CD4-positive, alpha-beta memory T cell (primary cell): ENCODE measurements at regions of chr5 and their contacts with region 1.

Region 1: DNA sequence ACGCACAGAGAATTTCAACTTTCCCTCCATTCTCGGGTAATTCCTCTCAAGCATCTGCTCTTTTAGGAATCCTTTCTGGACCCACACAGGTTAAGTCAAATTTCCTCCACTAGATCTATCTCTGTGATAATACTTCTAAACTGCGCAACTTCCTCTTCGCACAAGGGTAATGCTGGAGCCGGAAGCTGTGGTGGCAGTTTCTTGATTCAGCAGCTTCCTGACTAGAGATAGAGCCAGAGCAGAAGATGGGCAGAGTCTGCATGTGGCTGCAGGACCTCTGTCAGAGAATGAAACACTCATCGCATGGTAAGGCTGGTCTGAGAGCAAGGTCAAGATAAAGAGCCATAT is 11.1 kb upstream of the CDC42SE2 start:
- DNase-seq: peak; percentile 86 to 95 (median 88)
- H3K4me3 ChIP-seq: peak overlapping the region; percentile 60 to 80
- H3K4me3 Mint-ChIP-seq: peak overlapping the region; percentile 94 to 98 (median 97)
- H3K27ac ChIP-seq: peak overlapping the region; percentile 79
- H3K27ac Mint-ChIP-seq: peak overlapping the region; percentile 92 to 99 (median 97)
- H3K4me1 ChIP-seq: peaks cover 58% of the 10 kb centered on the region
- H3K4me1 Mint-ChIP-seq: peaks cover 46 to 78% (median 54%) of the 10 kb centered on the region in 4 donors
- H3K27me3 ChIP-seq: no peaks in the 10 kb centered on the region
- H3K27me3 Mint-ChIP-seq: no peaks in the 10 kb centered on the region

Region 2: DNA sequence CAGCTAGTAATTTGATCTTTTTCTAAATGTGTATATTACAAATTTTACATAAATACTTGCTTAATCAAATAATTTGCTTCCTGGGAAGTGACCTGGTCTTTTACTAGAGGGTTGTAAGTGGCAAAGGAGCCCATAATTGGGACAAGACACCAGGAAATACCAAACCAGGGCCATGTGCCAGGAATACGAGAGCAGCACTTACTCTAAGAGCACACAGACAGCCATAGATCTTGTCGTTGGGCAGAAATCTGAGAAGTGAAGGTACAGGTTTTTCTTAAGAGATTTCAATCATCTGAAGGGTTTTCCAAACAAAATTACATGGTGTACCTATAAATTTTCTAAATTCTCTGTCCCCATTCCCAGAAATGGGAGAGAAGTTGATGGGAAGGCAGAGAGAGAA is 267.0 kb before region 1 on chr5:
- CTCF ChIA-PET with region 1: no interaction called
- POLR2A ChIA-PET with region 1: no interaction called
- intact Hi-C with region 1: no loop called
- DNase-seq: no peak
- H3K4me3 ChIP-seq: no peak overlapping the region
- H3K4me3 Mint-ChIP-seq: no peak overlapping the region
- H3K27ac ChIP-seq: no peak overlapping the region
- H3K27ac Mint-ChIP-seq: no peak overlapping the region
- H3K4me1 ChIP-seq: no peaks in the 10 kb centered on the region
- H3K4me1 Mint-ChIP-seq: no peaks in the 10 kb centered on the region
- H3K27me3 ChIP-seq: no peaks in the 10 kb centered on the region
- H3K27me3 Mint-ChIP-seq: peaks cover 3 to 8% of the 10 kb centered on the region in 2 donors

Region 3: GRCh38 chr5:131170540-131171275 is 82.1 kb before region 1 on chr5 and contains the start of gene LYRM7:
- CTCF ChIA-PET with region 1: interaction called, 10 read pairs
- POLR2A ChIA-PET with region 1: interaction called, 23 read pairs
- intact Hi-C with region 1: loop called (anchors 1 kb)
- DNase-seq: peak; percentile 94 to 99 (median 97)
- H3K4me3 ChIP-seq: peak within 1 kb of the TSS; percentile 67 to 69
- H3K4me3 Mint-ChIP-seq: peak within 1 kb of the TSS; percentile 95 to 100 (median 98)
- H3K27ac ChIP-seq: peak within 1 kb of the TSS; percentile 88
- H3K27ac Mint-ChIP-seq: peak within 1 kb of the TSS; percentile 91 to 99 (median 97)
- H3K4me1 ChIP-seq: peaks cover 31% of the 10 kb centered on the region
- H3K4me1 Mint-ChIP-seq: peaks cover 33 to 72% (median 54%) of the 10 kb centered on the region in 4 donors
- H3K27me3 ChIP-seq: no peaks in the 10 kb centered on the region
- H3K27me3 Mint-ChIP-seq: no peaks in the 10 kb centered on the region
- total RNA-seq, gene LYRM7: 16.7 to 18.4 TPM

Region 4: GRCh38 chr5:131209506-131210150 is 43.2 kb before region 1 on chr5:
- CTCF ChIA-PET with region 1: interaction called, 8 read pairs
- POLR2A ChIA-PET with region 1: interaction called, 45 read pairs
- intact Hi-C with region 1: loop called (anchors 1 kb)
- DNase-seq: peak; percentile 78 to 87 (median 81)
- H3K4me3 ChIP-seq: peak overlapping the region in 1 of 2 donors; percentile 16
- H3K4me3 Mint-ChIP-seq: peak overlapping the region; percentile 58 to 89 (median 84)
- H3K27ac ChIP-seq: peak overlapping the region; percentile 75
- H3K27ac Mint-ChIP-seq: peak overlapping the region; percentile 91 to 99 (median 98)
- H3K4me1 ChIP-seq: peaks cover 57% of the 10 kb centered on the region
- H3K4me1 Mint-ChIP-seq: peaks cover 39 to 59% (median 50%) of the 10 kb centered on the region in 4 donors
- H3K27me3 ChIP-seq: no peaks in the 10 kb centered on the region
- H3K27me3 Mint-ChIP-seq: no peaks in the 10 kb centered on the region

Region 5: GRCh38 chr5:131214609-131215227 is 38.1 kb before region 1 on chr5:
- CTCF ChIA-PET with region 1: interaction called, 8 read pairs
- POLR2A ChIA-PET with region 1: interaction called, 45 read pairs
- intact Hi-C with region 1: loop called (anchors 1 kb)
- DNase-seq: no peak
- H3K4me3 ChIP-seq: no peak overlapping the region
- H3K4me3 Mint-ChIP-seq: peak overlapping the region in 2 of 8 donors; percentile 1 to 12
- H3K27ac ChIP-seq: no peak overlapping the region
- H3K27ac Mint-ChIP-seq: peak overlapping the region in 2 of 7 donors; percentile 31 to 50
- H3K4me1 ChIP-seq: peaks cover 46% of the 10 kb centered on the region
- H3K4me1 Mint-ChIP-seq: peaks cover 23 to 49% (median 34%) of the 10 kb centered on the region in 4 donors
- H3K27me3 ChIP-seq: no peaks in the 10 kb centered on the region
- H3K27me3 Mint-ChIP-seq: no peaks in the 10 kb centered on the region

Region 6: DNA sequence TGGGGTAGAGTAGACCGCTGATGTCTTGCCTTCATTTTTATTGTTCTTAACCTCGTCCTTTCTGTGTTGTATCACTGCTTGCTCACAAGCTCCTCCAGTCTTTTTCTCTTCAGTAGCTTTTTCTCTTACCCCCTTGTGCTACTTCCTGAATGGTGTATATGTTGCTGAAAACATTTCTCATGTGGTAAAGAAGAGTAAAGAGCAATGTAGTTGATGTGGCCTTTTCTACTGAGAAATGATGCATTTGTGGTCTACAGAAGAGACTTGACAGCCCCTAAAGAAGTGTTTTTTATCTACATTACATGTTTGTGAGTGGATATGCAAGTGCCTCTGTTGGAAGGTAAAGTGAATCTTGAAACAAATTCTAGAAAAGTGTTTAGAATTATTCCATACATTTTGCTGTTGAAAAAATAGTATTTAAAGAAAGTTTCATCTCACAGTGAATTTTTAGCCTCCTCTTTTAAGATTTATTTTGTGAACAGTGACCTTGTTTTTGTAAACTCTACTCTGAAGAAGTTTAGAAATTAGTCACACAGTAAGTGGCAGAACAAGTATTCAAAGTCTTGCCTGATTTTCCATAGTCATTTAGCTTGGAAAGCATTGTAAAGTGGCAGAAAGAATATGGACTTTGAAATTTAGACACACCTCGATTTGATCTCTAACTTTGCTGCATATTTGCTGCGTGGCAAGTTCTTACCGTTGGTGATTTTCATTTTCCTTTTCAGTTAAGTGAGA is 28.5 kb after region 1 on chr5:
- CTCF ChIA-PET with region 1: no interaction called
- POLR2A ChIA-PET with region 1: interaction called, 1,078 read pairs
- intact Hi-C with region 1: loop called (anchors 1 kb)
- DNase-seq: peak; percentile 57 to 89 (median 85)
- H3K4me3 ChIP-seq: peak overlapping the region; percentile 0 to 37
- H3K4me3 Mint-ChIP-seq: peak overlapping the region; percentile 57 to 90 (median 82)
- H3K27ac ChIP-seq: peak overlapping the region; percentile 63
- H3K27ac Mint-ChIP-seq: peak overlapping the region; percentile 71 to 95 (median 87)
- H3K4me1 ChIP-seq: peaks cover 89% of the 10 kb centered on the region
- H3K4me1 Mint-ChIP-seq: peaks cover 54 to 89% (median 73%) of the 10 kb centered on the region in 4 donors
- H3K27me3 ChIP-seq: no peaks in the 10 kb centered on the region
- H3K27me3 Mint-ChIP-seq: no peaks in the 10 kb centered on the region

Region 7: GRCh38 chr5:131581702-131582101 is 328.9 kb after region 1 on chr5:
- CTCF ChIA-PET with region 1: no interaction called
- POLR2A ChIA-PET with region 1: no interaction called
- intact Hi-C with region 1: no loop called
- DNase-seq: no peak
- H3K4me3 ChIP-seq: no peak overlapping the region
- H3K4me3 Mint-ChIP-seq: no peak overlapping the region
- H3K27ac ChIP-seq: no peak overlapping the region
- H3K27ac Mint-ChIP-seq: peak overlapping the region in 4 of 7 donors; percentile 7 to 70 (median 27)
- H3K4me1 ChIP-seq: peaks cover 5% of the 10 kb centered on the region
- H3K4me1 Mint-ChIP-seq: peaks cover 34 to 60% (median 46%) of the 10 kb centered on the region in 4 donors
- H3K27me3 ChIP-seq: no peaks in the 10 kb centered on the region
- H3K27me3 Mint-ChIP-seq: no peaks in the 10 kb centered on the region

Region 8: GRCh38 chr5:131634996-131635754 is 382.4 kb after region 1 on chr5 and contains the start of gene RAPGEF6:
- CTCF ChIA-PET with region 1: no interaction called
- POLR2A ChIA-PET with region 1: no interaction called
- intact Hi-C with region 1: loop called (anchors 2 kb)
- DNase-seq: peak; percentile 95 to 99 (median 99)
- H3K4me3 ChIP-seq: peak within 1 kb of the TSS; percentile 79 to 98
- H3K4me3 Mint-ChIP-seq: peak within 1 kb of the TSS; percentile 92 to 99 (median 95)
- H3K27ac ChIP-seq: peak within 1 kb of the TSS; percentile 97
- H3K27ac Mint-ChIP-seq: peak within 1 kb of the TSS; percentile 97 to 100 (median 99)
- H3K4me1 ChIP-seq: peaks cover 57% of the 10 kb centered on the region
- H3K4me1 Mint-ChIP-seq: peaks cover 18 to 40% (median 25%) of the 10 kb centered on the region in 4 donors
- H3K27me3 ChIP-seq: no peaks in the 10 kb centered on the region
- H3K27me3 Mint-ChIP-seq: no peaks in the 10 kb centered on the region
- total RNA-seq, gene RAPGEF6: 114 to 121 TPM

Region 9: GRCh38 chr5:131877873-131878272 is 625.1 kb after region 1 on chr5:
- CTCF ChIA-PET with region 1: no interaction called
- POLR2A ChIA-PET with region 1: no interaction called
- intact Hi-C with region 1: no loop called
- DNase-seq: no peak
- H3K4me3 ChIP-seq: no peak overlapping the region
- H3K4me3 Mint-ChIP-seq: no peak overlapping the region
- H3K27ac ChIP-seq: no peak overlapping the region
- H3K27ac Mint-ChIP-seq: no peak overlapping the region
- H3K4me1 ChIP-seq: no peaks in the 10 kb centered on the region
- H3K4me1 Mint-ChIP-seq: no peaks in the 10 kb centered on the region
- H3K27me3 ChIP-seq: no peaks in the 10 kb centered on the region
- H3K27me3 Mint-ChIP-seq: no peaks in the 10 kb centered on the region